CD4-positive, alpha-beta memory T cell (primary cell): ENCODE measurements at regions of chr7 and their contacts with region 1.

Region 1: GRCh38 chr7:36639826-36640225 is 84.5 kb downstream of the AOAH start:
- DNase-seq: peak; percentile 49 to 62 (median 55)
- H3K4me3 ChIP-seq: peak overlapping the region in 1 of 2 donors; percentile 0
- H3K4me3 Mint-ChIP-seq: peak overlapping the region; percentile 8 to 81 (median 72)
- H3K27ac ChIP-seq: peak overlapping the region; percentile 30
- H3K27ac Mint-ChIP-seq: peak overlapping the region; percentile 66 to 96 (median 88)
- H3K4me1 ChIP-seq: peaks cover 47% of the 10 kb centered on the region
- H3K4me1 Mint-ChIP-seq: peaks cover 46 to 76% (median 59%) of the 10 kb centered on the region in 4 donors
- H3K27me3 ChIP-seq: no peaks in the 10 kb centered on the region
- H3K27me3 Mint-ChIP-seq: no peaks in the 10 kb centered on the region

Region 2: GRCh38 chr7:36487756-36488336 is 152.0 kb before region 1 on chr7:
- CTCF ChIA-PET with region 1: interaction called, 21 read pairs
- POLR2A ChIA-PET with region 1: interaction called, 3 read pairs
- intact Hi-C with region 1: no loop called
- DNase-seq: peak; percentile 43 to 61 (median 59)
- H3K4me3 ChIP-seq: no peak overlapping the region
- H3K4me3 Mint-ChIP-seq: no peak overlapping the region
- H3K27ac ChIP-seq: no peak overlapping the region
- H3K27ac Mint-ChIP-seq: no peak overlapping the region
- H3K4me1 ChIP-seq: no peaks in the 10 kb centered on the region
- H3K4me1 Mint-ChIP-seq: peaks cover 0 to 2% (median 0%) of the 10 kb centered on the region in 4 donors
- H3K27me3 ChIP-seq: no peaks in the 10 kb centered on the region
- H3K27me3 Mint-ChIP-seq: peaks cover 0 to 1% of the 10 kb centered on the region in 2 donors

Region 3: GRCh38 chr7:36620166-36620708 is 19.6 kb before region 1 on chr7:
- CTCF ChIA-PET with region 1: interaction called, 3 read pairs
- POLR2A ChIA-PET with region 1: interaction called, 11 read pairs
- intact Hi-C with region 1: no loop called
- DNase-seq: no peak
- H3K4me3 ChIP-seq: no peak overlapping the region
- H3K4me3 Mint-ChIP-seq: no peak overlapping the region
- H3K27ac ChIP-seq: no peak overlapping the region
- H3K27ac Mint-ChIP-seq: no peak overlapping the region
- H3K4me1 ChIP-seq: peaks cover 10% of the 10 kb centered on the region
- H3K4me1 Mint-ChIP-seq: peaks cover 8 to 17% (median 10%) of the 10 kb centered on the region in 4 donors
- H3K27me3 ChIP-seq: no peaks in the 10 kb centered on the region
- H3K27me3 Mint-ChIP-seq: no peaks in the 10 kb centered on the region

Region 4: DNA sequence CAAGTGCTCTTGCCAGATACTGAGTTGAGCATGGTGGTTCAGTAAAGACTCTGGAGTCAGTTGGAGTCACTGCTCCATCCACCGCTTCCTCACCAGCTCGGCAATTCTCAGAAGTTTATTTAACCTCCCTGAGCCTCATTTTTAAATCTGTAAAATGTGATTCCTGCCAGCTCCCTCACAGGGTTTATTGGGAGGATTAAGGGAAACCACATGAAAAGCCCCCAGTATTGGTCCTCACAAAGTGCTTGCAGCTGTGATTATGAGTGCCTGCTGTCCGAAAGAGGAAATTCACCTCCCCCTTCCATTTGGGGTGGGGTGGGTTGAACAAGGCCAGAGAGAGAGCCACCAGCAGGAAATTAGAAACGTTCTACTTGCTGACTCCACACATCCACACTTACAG is 14.6 kb before region 1 on chr7:
- CTCF ChIA-PET with region 1: interaction called, 13 read pairs
- POLR2A ChIA-PET with region 1: interaction called, 14 read pairs
- intact Hi-C with region 1: no loop called
- DNase-seq: no peak
- H3K4me3 ChIP-seq: no peak overlapping the region
- H3K4me3 Mint-ChIP-seq: no peak overlapping the region
- H3K27ac ChIP-seq: no peak overlapping the region
- H3K27ac Mint-ChIP-seq: no peak overlapping the region
- H3K4me1 ChIP-seq: peaks cover 10% of the 10 kb centered on the region
- H3K4me1 Mint-ChIP-seq: peaks cover 8 to 17% (median 10%) of the 10 kb centered on the region in 4 donors
- H3K27me3 ChIP-seq: no peaks in the 10 kb centered on the region
- H3K27me3 Mint-ChIP-seq: peaks cover 0 to 3% of the 10 kb centered on the region in 2 donors

Region 5: GRCh38 chr7:36650766-36651312 is 11.0 kb after region 1 on chr7:
- CTCF ChIA-PET with region 1: interaction called, 5 read pairs
- POLR2A ChIA-PET with region 1: interaction called, 16 read pairs
- intact Hi-C with region 1: no loop called
- DNase-seq: no peak
- H3K4me3 ChIP-seq: no peak overlapping the region
- H3K4me3 Mint-ChIP-seq: no peak overlapping the region
- H3K27ac ChIP-seq: no peak overlapping the region
- H3K27ac Mint-ChIP-seq: peak overlapping the region in 1 of 7 donors; percentile 20
- H3K4me1 ChIP-seq: no peaks in the 10 kb centered on the region
- H3K4me1 Mint-ChIP-seq: peaks cover 0 to 9% (median 0%) of the 10 kb centered on the region in 4 donors
- H3K27me3 ChIP-seq: no peaks in the 10 kb centered on the region
- H3K27me3 Mint-ChIP-seq: no peaks in the 10 kb centered on the region

Region 6: GRCh38 chr7:36677769-36678437 is 38.1 kb after region 1 on chr7:
- CTCF ChIA-PET with region 1: interaction called, 8 read pairs
- POLR2A ChIA-PET with region 1: interaction called, 11 read pairs
- intact Hi-C with region 1: loop called (anchors 5 kb)
- DNase-seq: peak in 2 of 5 donors; percentile 10 to 11
- H3K4me3 ChIP-seq: no peak overlapping the region
- H3K4me3 Mint-ChIP-seq: peak overlapping the region in 7 of 8 donors; percentile 55 to 84 (median 68)
- H3K27ac ChIP-seq: no peak overlapping the region
- H3K27ac Mint-ChIP-seq: peak overlapping the region; percentile 79 to 96 (median 89)
- H3K4me1 ChIP-seq: peaks cover 16% of the 10 kb centered on the region
- H3K4me1 Mint-ChIP-seq: peaks cover 18 to 39% (median 28%) of the 10 kb centered on the region in 4 donors
- H3K27me3 ChIP-seq: no peaks in the 10 kb centered on the region
- H3K27me3 Mint-ChIP-seq: no peaks in the 10 kb centered on the region

Region 7: DNA sequence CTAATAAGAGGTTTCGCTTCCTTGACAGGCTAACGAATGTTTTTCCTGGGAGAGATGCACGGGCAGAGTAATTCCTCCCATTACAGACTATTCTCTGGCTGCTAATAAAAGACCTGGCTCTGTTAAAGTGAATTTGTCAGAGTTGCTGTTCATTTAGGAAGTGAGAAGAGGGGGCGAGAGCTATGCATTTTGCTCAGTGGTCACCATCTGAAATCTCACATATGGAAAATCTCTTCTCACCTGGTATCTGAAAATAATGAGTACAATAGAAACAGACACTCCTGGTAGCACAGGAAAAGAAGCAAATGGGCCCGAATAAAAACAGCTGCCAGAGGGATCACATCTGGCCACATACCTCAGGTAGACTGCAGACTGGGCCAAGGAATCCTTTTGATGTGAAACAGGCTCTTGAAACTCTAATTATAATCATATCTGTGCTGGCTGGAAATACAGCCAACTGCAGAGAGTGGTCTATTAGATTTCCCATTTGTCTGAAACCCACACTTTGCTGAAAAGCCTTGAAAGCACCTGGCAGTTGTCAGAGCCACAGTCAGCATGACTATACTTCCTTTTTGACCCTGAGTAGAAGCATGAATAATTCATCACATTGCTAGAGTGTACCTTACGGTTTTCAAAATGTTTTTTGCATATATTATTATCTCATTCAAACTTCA is 50.8 kb after region 1 on chr7:
- CTCF ChIA-PET with region 1: no interaction called
- POLR2A ChIA-PET with region 1: no interaction called
- intact Hi-C with region 1: no loop called
- DNase-seq: no peak
- H3K4me3 ChIP-seq: no peak overlapping the region
- H3K4me3 Mint-ChIP-seq: peak overlapping the region in 1 of 8 donors; percentile 3
- H3K27ac ChIP-seq: no peak overlapping the region
- H3K27ac Mint-ChIP-seq: peak overlapping the region in 2 of 7 donors; percentile 24 to 38
- H3K4me1 ChIP-seq: peaks cover 9% of the 10 kb centered on the region
- H3K4me1 Mint-ChIP-seq: peaks cover 9 to 40% (median 23%) of the 10 kb centered on the region in 4 donors
- H3K27me3 ChIP-seq: no peaks in the 10 kb centered on the region
- H3K27me3 Mint-ChIP-seq: no peaks in the 10 kb centered on the region

Region 8: DNA sequence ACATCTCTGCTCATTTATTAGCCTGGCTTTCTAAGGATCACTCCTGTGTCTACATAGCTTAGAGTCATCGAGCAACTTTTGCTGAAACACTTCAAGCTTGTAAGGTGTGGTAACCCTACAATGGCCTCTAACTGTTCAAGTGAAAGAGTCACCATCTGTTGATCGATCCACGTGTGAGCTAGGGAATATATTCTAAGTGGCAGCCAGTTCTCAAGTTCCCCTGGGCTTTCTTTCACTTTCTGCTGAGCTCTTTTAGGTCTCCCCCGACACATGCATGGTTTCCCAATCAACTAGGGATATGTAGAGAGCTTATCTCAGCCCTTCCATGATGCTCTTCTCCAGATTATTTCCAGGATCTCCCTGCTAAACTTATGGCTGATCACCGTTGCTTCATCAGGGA is 68.9 kb after region 1 on chr7:
- CTCF ChIA-PET with region 1: no interaction called
- POLR2A ChIA-PET with region 1: no interaction called
- intact Hi-C with region 1: no loop called
- DNase-seq: no peak
- H3K4me3 ChIP-seq: no peak overlapping the region
- H3K4me3 Mint-ChIP-seq: no peak overlapping the region
- H3K27ac ChIP-seq: no peak overlapping the region
- H3K27ac Mint-ChIP-seq: no peak overlapping the region
- H3K4me1 ChIP-seq: no peaks in the 10 kb centered on the region
- H3K4me1 Mint-ChIP-seq: peaks cover 0 to 18% (median under 1%) of the 10 kb centered on the region in 4 donors
- H3K27me3 ChIP-seq: no peaks in the 10 kb centered on the region
- H3K27me3 Mint-ChIP-seq: no peaks in the 10 kb centered on the region